Psoas muscle (tissue), 8 donors: ENCODE measurements at regions of chr11 and their contacts with region 1.

Region 1: DNA sequence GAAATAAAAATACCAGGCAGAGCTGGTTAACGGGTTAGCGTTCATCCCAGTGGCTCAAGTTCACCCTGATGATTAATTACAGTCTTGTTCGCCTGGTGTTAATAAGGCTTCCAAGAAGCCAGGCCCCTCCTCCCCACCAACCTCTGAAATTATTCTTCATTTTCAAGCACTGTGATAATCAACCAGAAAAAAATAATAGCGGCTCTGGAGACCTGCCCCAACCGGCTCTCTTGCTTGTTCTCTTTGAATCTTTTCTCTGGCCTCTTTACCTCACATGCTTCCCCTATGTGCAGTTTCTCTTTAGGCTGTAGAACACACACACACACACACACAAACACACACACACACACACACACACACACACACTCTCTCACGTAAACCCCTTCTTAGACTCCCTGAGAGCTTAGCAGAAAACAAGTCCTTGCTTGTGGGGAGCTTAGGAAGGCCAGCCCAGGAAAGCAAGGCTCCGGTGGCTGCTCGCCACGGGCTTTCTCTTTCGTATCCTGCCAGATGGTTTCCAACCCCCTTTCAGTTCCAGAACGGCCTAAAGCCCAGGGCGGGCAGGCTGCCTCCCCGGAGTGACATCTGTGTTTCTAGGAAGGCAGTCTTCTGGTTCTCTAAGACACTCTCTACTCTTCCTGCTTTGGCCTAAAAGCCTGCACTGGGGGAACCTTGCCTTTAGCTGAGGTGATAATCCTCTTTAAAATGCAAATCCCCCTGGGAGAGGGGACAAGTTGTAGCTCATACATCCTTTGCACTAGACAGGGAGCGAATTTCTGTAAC is 106.4 kb upstream of the SESN3 start:
- DNase-seq: peak; percentile 69 to 79
- ATAC-seq: peak; percentile 57 to 84 (median 77)
- H3K4me3 ChIP-seq: peak overlapping the region; percentile 17
- H3K27ac ChIP-seq: peak overlapping the region; percentile 76
- H3K4me1 ChIP-seq: peaks cover 27% of the 10 kb centered on the region
- H3K27me3 ChIP-seq: no peaks in the 10 kb centered on the region
- CTCF ChIP-seq: no peak

Region 2: DNA sequence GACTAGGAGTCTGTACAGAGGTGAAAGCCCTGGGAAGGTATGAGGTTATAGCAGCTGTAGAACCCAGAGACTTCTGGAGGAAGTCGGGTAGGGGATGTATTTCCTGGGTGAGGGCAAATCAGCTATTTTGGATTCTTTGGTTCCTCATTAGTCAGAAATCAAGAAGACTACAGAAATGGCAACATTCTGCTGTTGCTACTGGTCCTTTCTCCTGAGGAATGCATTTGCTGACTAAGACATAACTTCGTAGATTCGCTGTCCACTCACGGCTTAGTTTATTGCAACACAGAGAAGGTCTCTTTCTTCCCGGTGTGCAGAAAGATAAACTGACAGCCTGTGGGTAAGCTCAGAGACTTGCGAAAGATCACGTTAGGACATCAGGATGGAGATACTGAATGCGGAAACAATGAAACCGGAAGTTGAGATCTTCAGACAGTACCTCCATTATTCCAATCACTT is 81.0 kb before region 1 on chr11:
- intact Hi-C with region 1: loop called in 1 of 2 experiments (anchors 5 kb)
- DNase-seq: no peak
- ATAC-seq: no peak
- H3K4me3 ChIP-seq: no peak overlapping the region
- H3K27ac ChIP-seq: no peak overlapping the region
- H3K4me1 ChIP-seq: peaks cover 5% of the 10 kb centered on the region
- H3K27me3 ChIP-seq: no peaks in the 10 kb centered on the region
- CTCF ChIP-seq: no peak

Region 3: DNA sequence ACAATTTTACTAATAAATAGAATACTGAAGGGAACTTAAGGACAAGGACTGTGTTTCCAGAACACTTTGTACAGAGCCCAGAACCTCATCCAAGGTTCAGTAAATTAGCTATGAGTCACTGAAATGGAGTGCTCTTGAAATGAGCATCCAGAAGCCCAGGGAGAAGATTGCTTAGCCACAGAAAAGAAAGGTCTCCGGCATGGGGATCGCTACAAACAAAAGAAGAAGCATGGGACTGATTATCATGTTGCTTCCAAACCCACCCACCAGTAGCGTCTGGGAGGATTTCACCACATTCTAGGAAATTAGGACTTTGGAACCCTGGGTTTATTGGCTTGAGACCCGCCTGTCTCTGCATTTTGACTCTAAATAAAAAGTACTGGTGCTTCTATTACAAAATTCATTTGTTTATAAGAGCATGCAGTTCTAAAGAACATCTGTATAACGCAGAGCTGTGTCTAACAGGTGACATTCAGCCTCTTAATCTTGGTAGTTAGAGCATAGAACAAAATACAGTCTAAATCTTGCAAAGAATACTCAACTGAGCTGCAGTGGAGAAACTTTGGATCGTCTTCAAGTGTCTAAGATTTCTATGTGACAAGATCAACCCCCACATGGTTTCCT is 70.5 kb before region 1 on chr11:
- intact Hi-C with region 1: no loop called
- DNase-seq: no peak
- ATAC-seq: peak in 3 of 4 donors; percentile 56 to 72 (median 62)
- H3K4me3 ChIP-seq: no peak overlapping the region
- H3K27ac ChIP-seq: no peak overlapping the region
- H3K4me1 ChIP-seq: no peaks in the 10 kb centered on the region
- H3K27me3 ChIP-seq: no peaks in the 10 kb centered on the region
- CTCF ChIP-seq: no peak

Region 4: GRCh38 chr11:95465887-95466286 is 128.5 kb after region 1 on chr11:
- intact Hi-C with region 1: no loop called
- DNase-seq: no peak
- ATAC-seq: no peak
- H3K4me3 ChIP-seq: no peak overlapping the region
- H3K27ac ChIP-seq: no peak overlapping the region
- H3K4me1 ChIP-seq: no peaks in the 10 kb centered on the region
- H3K27me3 ChIP-seq: no peaks in the 10 kb centered on the region
- CTCF ChIP-seq: no peak